PC-9 (cell line): ENCODE measurements at regions of chr3 and their contacts with region 1.

Region 1: DNA sequence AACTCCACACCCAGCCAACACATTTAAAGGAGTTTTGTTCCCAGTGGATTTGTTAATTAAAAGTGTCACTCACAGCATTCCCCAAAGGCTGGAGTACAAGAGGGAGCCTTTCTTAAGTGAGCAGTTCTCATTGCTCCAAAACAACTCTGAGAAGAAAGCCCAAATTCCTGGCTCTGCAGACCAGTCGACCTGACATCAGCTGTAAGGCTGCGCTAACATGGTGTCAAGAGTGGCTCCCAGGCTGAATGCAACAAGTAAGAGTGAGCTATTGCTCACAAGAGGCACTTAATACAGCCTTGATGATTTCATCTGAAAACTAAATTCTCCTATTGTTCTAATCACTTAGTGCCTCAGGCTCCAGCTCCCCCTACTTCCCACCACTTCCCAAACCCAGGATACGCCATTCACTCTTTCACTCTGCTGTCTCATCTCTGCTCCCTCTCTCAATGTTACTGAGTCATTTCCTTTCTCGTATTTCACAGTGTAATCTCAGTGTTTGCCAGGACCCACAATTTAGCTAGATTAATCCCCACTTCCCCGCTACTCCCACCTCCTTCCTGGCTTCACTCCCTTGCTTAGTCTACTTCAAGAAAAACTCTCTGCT is 81.8 kb downstream of the WWTR1 start:
- DNase-seq: peak; percentile 73 to 91
- H3K4me3 ChIP-seq: peak overlapping the region; percentile 35; the same call in 1 of the 2 replicates
- H3K27ac ChIP-seq: peak overlapping the region; percentile 98
- H3K4me1 ChIP-seq: peaks cover 89% of the 10 kb centered on the region
- H3K27me3 ChIP-seq: no peaks in the 10 kb centered on the region
- CTCF ChIP-seq: no peak

Region 2: DNA sequence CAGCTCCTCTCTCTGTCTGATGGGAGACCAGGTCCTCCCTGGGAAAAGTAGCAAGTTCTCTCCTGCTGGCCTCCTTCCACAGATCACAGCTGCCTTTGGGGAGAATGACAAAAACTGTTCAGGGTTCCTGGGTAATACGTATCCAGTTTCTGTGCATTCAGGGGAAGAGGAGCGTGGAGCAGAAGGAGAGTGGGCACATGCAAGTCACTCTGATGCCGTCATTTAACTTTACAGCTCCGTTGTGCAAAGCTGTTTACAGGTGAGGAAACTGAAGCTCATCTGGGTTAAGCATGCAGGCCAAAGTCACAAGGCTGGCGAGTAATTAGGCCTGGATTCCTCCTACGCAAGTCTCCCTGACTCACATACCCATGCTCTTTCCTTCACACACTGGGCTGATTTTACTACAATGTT is 191.1 kb before region 1 on chr3:
- CTCF ChIA-PET with region 1: no interaction called
- POLR2A ChIA-PET with region 1: no interaction called
- intact Hi-C with region 1: loop called (anchors 5 kb)
- DNase-seq: peak in 1 of 2 experiments; percentile 66
- H3K4me3 ChIP-seq: no peak overlapping the region
- H3K27ac ChIP-seq: peak overlapping the region; percentile 100
- H3K4me1 ChIP-seq: peaks cover 71% of the 10 kb centered on the region
- H3K27me3 ChIP-seq: no peaks in the 10 kb centered on the region
- CTCF ChIP-seq: no peak

Region 3: GRCh38 chr3:149512209-149512782 is 63.8 kb before region 1 on chr3:
- CTCF ChIA-PET with region 1: no interaction called
- POLR2A ChIA-PET with region 1: no interaction called
- intact Hi-C with region 1: no loop called
- DNase-seq: peak; percentile 53 to 73
- H3K4me3 ChIP-seq: no peak overlapping the region
- H3K27ac ChIP-seq: no peak overlapping the region
- H3K4me1 ChIP-seq: peaks cover 12% of the 10 kb centered on the region; the same call in 1 of the 2 replicates
- H3K27me3 ChIP-seq: no peaks in the 10 kb centered on the region
- CTCF ChIP-seq: peak; percentile 86

Region 4: DNA sequence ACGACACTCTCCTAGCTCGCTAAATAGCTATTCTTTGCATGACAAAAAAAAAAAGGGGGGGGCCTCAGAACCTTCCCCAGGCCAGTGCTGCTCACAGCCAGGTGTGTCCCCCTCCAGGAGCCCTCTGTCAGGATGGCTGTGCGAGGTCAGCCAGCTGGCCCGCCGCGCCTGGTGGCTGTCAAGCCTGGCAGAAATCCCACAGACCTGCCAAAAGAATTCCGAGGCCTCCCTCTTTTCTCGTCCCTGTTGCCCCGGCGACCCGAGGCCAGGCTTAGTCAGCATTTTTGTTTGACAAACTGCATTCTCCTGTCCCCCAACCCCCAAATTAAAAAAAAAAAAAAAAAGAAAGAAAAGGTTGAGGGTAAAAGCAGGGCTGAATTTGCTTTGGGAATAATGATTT is 39.6 kb before region 1 on chr3:
- CTCF ChIA-PET with region 1: interaction called, 5 read pairs
- POLR2A ChIA-PET with region 1: interaction called, 5 read pairs
- intact Hi-C with region 1: loop called (anchors 1 kb)
- DNase-seq: no peak
- H3K4me3 ChIP-seq: no peak overlapping the region
- H3K27ac ChIP-seq: no peak overlapping the region
- H3K4me1 ChIP-seq: no peaks in the 10 kb centered on the region
- H3K27me3 ChIP-seq: no peaks in the 10 kb centered on the region
- CTCF ChIP-seq: no peak

Region 5: GRCh38 chr3:149603126-149604074 is 27.3 kb after region 1 on chr3:
- CTCF ChIA-PET with region 1: no interaction called
- POLR2A ChIA-PET with region 1: interaction called, 41 read pairs
- intact Hi-C with region 1: no loop called
- DNase-seq: no peak
- H3K4me3 ChIP-seq: no peak overlapping the region
- H3K27ac ChIP-seq: peak overlapping the region; percentile 62
- H3K4me1 ChIP-seq: peaks cover 44% of the 10 kb centered on the region
- H3K27me3 ChIP-seq: no peaks in the 10 kb centered on the region
- CTCF ChIP-seq: no peak

Region 6: DNA sequence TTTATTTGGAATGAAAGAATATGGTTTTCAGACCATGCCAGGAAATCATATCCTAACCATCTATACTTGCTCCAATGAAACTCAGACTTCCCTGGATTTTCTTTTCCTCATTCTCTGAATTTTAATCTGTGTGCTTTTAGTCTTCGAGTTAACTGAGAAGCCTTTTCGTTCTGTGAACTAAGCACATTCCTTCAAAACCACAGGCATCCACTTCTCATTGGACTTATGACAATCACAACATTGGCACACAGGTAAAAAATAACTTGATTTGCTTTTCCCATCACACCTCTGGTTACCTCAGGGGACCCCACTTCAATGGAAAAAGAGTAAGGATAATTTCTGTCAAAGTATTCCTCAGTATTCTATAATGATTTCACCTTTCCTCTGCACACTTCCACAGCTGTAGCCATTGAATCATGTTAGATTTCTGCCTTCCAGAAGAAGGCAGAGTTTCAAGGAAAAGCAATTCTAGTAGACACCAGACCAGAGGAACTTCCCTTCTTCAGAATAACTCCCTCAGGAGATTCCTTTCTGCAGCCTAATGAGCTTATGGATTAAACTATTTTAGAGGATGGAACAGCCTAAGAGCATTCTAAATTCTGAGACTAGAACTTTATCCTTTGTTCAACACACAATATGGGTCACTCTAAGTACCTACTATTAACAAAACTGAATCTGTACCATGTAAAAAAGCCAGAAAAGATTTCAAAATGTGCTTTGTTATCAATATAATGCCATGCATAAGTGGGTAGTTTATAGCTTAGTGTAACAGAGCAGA is 160.3 kb after region 1 on chr3:
- CTCF ChIA-PET with region 1: no interaction called
- POLR2A ChIA-PET with region 1: no interaction called
- intact Hi-C with region 1: loop called (anchors 1 kb)
- DNase-seq: peak; percentile 57 to 90
- H3K4me3 ChIP-seq: no peak overlapping the region
- H3K27ac ChIP-seq: peak overlapping the region; percentile 81
- H3K4me1 ChIP-seq: peaks cover 27% of the 10 kb centered on the region
- H3K27me3 ChIP-seq: no peaks in the 10 kb centered on the region
- CTCF ChIP-seq: no peak

Region 7: GRCh38 chr3:149771652-149772271 is 195.7 kb after region 1 on chr3:
- CTCF ChIA-PET with region 1: interaction called, 3 read pairs
- POLR2A ChIA-PET with region 1: interaction called, 16 read pairs
- intact Hi-C with region 1: no loop called
- DNase-seq: peak in 1 of 2 experiments; percentile 43
- H3K4me3 ChIP-seq: no peak overlapping the region
- H3K27ac ChIP-seq: no peak overlapping the region
- H3K4me1 ChIP-seq: no peaks in the 10 kb centered on the region
- H3K27me3 ChIP-seq: no peaks in the 10 kb centered on the region
- CTCF ChIP-seq: peak; percentile 85

Region 8: DNA sequence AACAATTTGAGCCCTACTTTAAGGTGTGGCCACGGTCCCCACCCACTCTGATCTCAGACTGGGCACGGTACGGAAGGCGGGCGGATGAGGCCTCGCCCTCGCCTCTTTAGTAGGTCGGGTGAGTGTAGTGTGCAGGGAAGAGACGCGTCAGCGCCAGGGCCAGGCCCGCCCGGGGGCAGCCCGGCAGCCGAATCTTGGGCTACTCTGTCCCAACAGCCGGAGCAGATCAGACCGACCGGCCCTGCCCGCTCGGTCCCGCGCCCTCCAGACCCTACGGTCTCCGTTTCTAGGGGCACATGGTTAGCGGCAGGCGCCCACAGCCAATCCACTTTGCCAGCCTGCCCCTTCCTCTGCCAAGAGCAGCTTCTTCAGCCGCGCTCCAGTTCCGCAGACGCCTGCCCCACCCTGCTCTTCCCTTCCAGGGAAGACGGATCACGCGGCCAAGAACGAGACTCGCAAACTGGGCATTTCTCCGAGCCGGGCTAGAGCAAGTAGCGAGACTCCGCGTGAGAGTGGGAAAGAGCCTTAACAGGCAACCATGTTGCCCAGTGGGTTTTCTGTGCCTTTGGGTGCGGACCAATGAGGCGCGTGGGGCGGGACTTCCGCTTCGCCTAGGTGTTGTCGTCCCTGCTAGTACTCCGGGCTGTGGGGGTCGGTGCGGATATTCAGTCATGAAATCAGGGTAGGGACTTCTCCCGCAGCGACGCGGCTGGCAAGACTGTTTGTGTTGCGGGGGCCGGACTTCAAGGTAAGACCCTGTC is 236.7 kb after region 1 on chr3 and contains the start of gene RNF13:
- CTCF ChIA-PET with region 1: interaction called, 22 read pairs
- POLR2A ChIA-PET with region 1: interaction called, 3 read pairs
- intact Hi-C with region 1: no loop called
- DNase-seq: peak; percentile 82 to 93
- H3K4me3 ChIP-seq: peak within 1 kb of the TSS; percentile 84
- H3K27ac ChIP-seq: peak within 1 kb of the TSS; percentile 96
- H3K4me1 ChIP-seq: peaks cover 46% of the 10 kb centered on the region
- H3K27me3 ChIP-seq: no peaks in the 10 kb centered on the region
- CTCF ChIP-seq: no peak
- total RNA-seq, gene RNF13: 40.1 and 65.0 TPM in 2 replicates

Region 9: GRCh38 chr3:149886957-149887356 is 310.9 kb after region 1 on chr3:
- CTCF ChIA-PET with region 1: no interaction called
- POLR2A ChIA-PET with region 1: no interaction called
- intact Hi-C with region 1: no loop called
- DNase-seq: no peak
- H3K4me3 ChIP-seq: no peak overlapping the region
- H3K27ac ChIP-seq: no peak overlapping the region
- H3K4me1 ChIP-seq: no peaks in the 10 kb centered on the region
- H3K27me3 ChIP-seq: no peaks in the 10 kb centered on the region
- CTCF ChIP-seq: no peak